HEK293 (cell line): ENCODE measurements at regions of chr9 and their contacts with region 1.

Region 1: GRCh38 chr9:69097064-69097463 is 61.5 kb downstream of the FXN start:
- H3K4me3 ChIP-seq: no peak overlapping the region
- H3K27ac ChIP-seq: no peak overlapping the region
- H3K4me1 ChIP-seq: no peaks in the 10 kb centered on the region; the same call in 1 of the 2 replicates
- CTCF ChIP-seq: no peak

Region 2: GRCh38 chr9:69044240-69045219 is 52.5 kb before region 1 on chr9:
- CTCF ChIA-PET with region 1: no interaction called
- POLR2A ChIA-PET with region 1: interaction called, 10 read pairs
- H3K4me3 ChIP-seq: no peak overlapping the region
- H3K27ac ChIP-seq: no peak overlapping the region
- H3K4me1 ChIP-seq: peaks cover 3% of the 10 kb centered on the region; the same call in 1 of the 2 replicates
- CTCF ChIP-seq: no peak

Region 3: GRCh38 chr9:69066955-69067354 is 30.1 kb before region 1 on chr9:
- CTCF ChIA-PET with region 1: no interaction called
- POLR2A ChIA-PET with region 1: no interaction called
- H3K4me3 ChIP-seq: no peak overlapping the region
- H3K27ac ChIP-seq: no peak overlapping the region
- H3K4me1 ChIP-seq: no peaks in the 10 kb centered on the region
- CTCF ChIP-seq: no peak